CD4-positive, alpha-beta T cell (primary cell): ENCODE measurements at regions of chr7 and their contacts with region 1.

Region 1: GRCh38 chr7:35630024-35630972 is 64.6 kb downstream of the HERPUD2 start:
- DNase-seq: no peak
- ATAC-seq: peak; percentile 32
- H3K4me3 ChIP-seq: no peak overlapping the region
- H3K4me3 Mint-ChIP-seq: no peak overlapping the region
- H3K27ac ChIP-seq: no peak overlapping the region
- H3K27ac Mint-ChIP-seq: peak overlapping the region; percentile 5
- H3K4me1 ChIP-seq: no peaks in the 10 kb centered on the region
- H3K4me1 Mint-ChIP-seq: no peaks in the 10 kb centered on the region
- H3K27me3 ChIP-seq: no peaks in the 10 kb centered on the region
- H3K27me3 Mint-ChIP-seq: no peaks in the 10 kb centered on the region
- CTCF ChIP-seq: no peak

Region 2: DNA sequence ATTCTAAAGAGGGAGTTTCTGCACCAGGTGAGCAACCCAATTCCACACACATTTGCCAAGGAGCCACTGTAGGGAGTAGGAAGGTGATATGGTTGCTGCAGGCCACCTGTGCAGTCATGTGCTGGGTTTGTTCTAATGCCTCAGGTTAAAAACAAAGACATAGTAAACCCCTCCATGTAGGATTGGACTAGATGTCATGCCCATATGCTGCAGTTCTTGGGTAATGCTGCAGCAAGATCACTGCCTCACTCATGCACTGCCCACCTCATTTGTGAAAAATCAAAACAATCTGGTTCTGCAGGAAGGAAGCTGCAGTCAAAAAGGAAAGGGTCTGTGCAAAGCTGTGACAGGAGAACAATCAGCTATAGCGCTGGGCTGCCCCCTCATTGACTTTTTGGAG is 239.2 kb before region 1 on chr7:
- CTCF ChIA-PET with region 1: no interaction called
- POLR2A ChIA-PET with region 1: no interaction called
- intact Hi-C with region 1: no loop called
- DNase-seq: no peak
- ATAC-seq: no peak
- H3K4me3 ChIP-seq: no peak overlapping the region
- H3K4me3 Mint-ChIP-seq: no peak overlapping the region
- H3K27ac ChIP-seq: no peak overlapping the region
- H3K27ac Mint-ChIP-seq: no peak overlapping the region
- H3K4me1 ChIP-seq: no peaks in the 10 kb centered on the region
- H3K4me1 Mint-ChIP-seq: no peaks in the 10 kb centered on the region
- H3K27me3 ChIP-seq: peaks cover 5% of the 10 kb centered on the region in 2 experiments
- H3K27me3 Mint-ChIP-seq: peaks cover 5% of the 10 kb centered on the region
- CTCF ChIP-seq: no peak

Region 3: GRCh38 chr7:35900651-35901050 is 270.4 kb after region 1 on chr7:
- CTCF ChIA-PET with region 1: no interaction called
- POLR2A ChIA-PET with region 1: no interaction called
- intact Hi-C with region 1: loop called (anchors 5 kb)
- DNase-seq: no peak
- ATAC-seq: no peak
- H3K4me3 ChIP-seq: no peak overlapping the region
- H3K4me3 Mint-ChIP-seq: no peak overlapping the region
- H3K27ac ChIP-seq: no peak overlapping the region
- H3K27ac Mint-ChIP-seq: no peak overlapping the region
- H3K4me1 ChIP-seq: no peaks in the 10 kb centered on the region
- H3K4me1 Mint-ChIP-seq: no peaks in the 10 kb centered on the region
- H3K27me3 ChIP-seq: no peaks in the 10 kb centered on the region
- H3K27me3 Mint-ChIP-seq: no peaks in the 10 kb centered on the region
- CTCF ChIP-seq: no peak